ENCODE measurements at regions of chr11 and their contacts with region 1.

Region 1: DNA sequence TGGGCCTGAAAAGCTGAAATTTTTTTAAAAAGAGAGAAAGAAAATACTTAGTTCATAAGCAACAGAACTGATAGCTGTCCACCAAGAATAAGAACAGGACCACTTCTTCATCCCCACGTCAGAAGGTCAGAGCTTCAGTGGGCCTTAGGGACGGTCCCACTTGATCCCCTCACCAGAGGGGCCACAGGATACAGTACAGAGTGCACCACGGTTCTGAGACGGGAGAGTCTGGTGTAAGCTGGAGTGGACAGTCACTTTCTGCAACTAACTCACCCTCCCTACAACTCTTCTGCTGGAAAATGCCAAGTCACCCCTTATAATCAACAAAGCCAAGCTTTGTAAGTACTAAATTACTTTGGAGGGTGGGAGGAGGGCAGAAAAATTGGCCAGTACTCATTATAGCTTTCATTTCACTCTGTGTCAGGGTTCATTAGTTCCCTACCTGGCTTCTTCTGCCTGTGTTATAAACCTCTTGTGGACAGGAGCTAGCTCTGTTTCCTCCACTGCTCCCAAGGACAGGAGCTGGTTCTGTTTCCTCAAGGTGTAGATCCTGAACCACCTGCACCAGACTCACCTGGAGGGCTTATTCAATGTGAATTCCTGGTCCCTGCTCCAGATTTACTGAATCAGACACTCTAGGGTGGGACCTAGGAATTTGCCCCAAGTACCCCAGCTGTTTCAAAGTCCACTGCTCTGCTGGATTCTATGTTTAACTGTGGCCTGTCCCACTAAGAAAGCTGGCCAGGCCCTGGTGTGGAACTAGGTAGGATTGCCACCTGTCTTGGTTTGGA is 39.6 kb downstream of the SCGB1A1 start:
- DNase-seq: no peak
- H3K4me3 ChIP-seq: no peak overlapping the region
- H3K27ac ChIP-seq: peak overlapping the region; percentile 23 to 50
- H3K4me1 ChIP-seq: no peaks in the 10 kb centered on the region
- H3K27me3 ChIP-seq: no peaks in the 10 kb centered on the region
- CTCF ChIP-seq: no peak
- POLR2A ChIP-seq: no peak

Region 2: DNA sequence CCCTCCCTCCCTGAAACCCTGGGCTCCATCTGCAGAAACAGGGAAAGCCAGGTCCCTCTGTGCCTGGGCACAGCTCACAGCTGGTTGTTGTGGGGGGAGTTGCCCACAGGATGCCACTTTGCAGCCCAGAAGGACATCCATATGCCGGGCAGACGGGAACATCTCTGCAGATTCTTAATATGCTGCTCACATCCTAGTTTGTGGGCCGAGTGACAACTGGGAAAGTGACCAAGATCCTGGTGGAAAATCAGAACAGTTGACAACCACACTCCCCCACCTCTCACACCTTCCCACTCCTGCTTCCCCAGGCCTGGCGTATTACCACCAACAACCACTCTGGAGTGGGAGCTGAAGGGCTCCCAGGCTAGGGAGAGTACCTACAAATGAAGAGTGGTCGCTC is 46.9 kb before region 1 on chr11:
- intact Hi-C with region 1: no loop called
- DNase-seq: no peak
- H3K4me3 ChIP-seq: no peak overlapping the region
- H3K27ac ChIP-seq: peak overlapping the region; percentile 50 to 51
- H3K4me1 ChIP-seq: peaks cover 6 to 10% of the 10 kb centered on the region in 2 donors
- H3K27me3 ChIP-seq: no peaks in the 10 kb centered on the region
- CTCF ChIP-seq: no peak
- POLR2A ChIP-seq: no peak

Region 3: GRCh38 chr11:62437616-62438015 is 20.8 kb before region 1 on chr11:
- intact Hi-C with region 1: loop called (anchors 1 kb)
- DNase-seq: no peak
- H3K4me3 ChIP-seq: no peak overlapping the region
- H3K27ac ChIP-seq: no peak overlapping the region
- H3K4me1 ChIP-seq: peaks cover 0 to 7% of the 10 kb centered on the region in 2 donors
- H3K27me3 ChIP-seq: no peaks in the 10 kb centered on the region
- CTCF ChIP-seq: no peak
- POLR2A ChIP-seq: no peak

Measured in breast epithelium (tissue), 4 donors.